Activated CD4-positive, alpha-beta memory T cell treated with anti-CD3 and anti-CD28 coated beads for 36 hours (primary cell): ENCODE measurements at regions of chr11 and their contacts with region 1.

Region 1: DNA sequence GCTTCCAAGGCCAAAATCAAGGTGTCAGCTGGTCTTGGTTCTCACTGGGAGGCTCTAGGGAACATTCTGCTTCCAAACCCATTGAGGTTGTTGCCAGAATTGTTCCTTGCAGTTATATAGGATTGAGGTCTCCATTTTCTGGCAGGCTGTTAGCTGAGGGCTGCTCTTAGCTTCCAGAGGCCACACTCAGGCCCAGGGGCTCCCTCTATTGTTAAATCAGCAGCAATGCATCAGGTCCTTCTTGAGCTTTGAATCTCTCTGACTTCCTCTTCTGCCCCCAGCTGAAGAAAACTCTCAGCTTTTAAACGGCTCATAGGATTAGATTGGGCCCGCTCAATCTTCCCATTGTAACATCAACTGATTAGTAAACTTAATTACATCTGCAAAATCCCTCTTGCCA is 39.3 kb upstream of the BSX start:
- DNase-seq: peak; percentile 34
- H3K4me3 Mint-ChIP-seq: no peak overlapping the region
- H3K27ac Mint-ChIP-seq: no peak overlapping the region
- H3K4me1 Mint-ChIP-seq: peaks cover 5% of the 10 kb centered on the region
- H3K27me3 Mint-ChIP-seq: peaks cover 3% of the 10 kb centered on the region

Region 2: GRCh38 chr11:122578168-122578825 is 442.7 kb before region 1 on chr11:
- CTCF ChIA-PET with region 1: interaction called, 15 read pairs
- POLR2A ChIA-PET with region 1: no interaction called
- intact Hi-C with region 1: loop called (anchors 2 kb)
- DNase-seq: no peak
- H3K4me3 Mint-ChIP-seq: no peak overlapping the region
- H3K27ac Mint-ChIP-seq: no peak overlapping the region
- H3K4me1 Mint-ChIP-seq: peaks cover 8% of the 10 kb centered on the region
- H3K27me3 Mint-ChIP-seq: peaks cover 2% of the 10 kb centered on the region

Region 3: GRCh38 chr11:122796128-122796717 is 224.7 kb before region 1 on chr11:
- CTCF ChIA-PET with region 1: interaction called, 10 read pairs
- POLR2A ChIA-PET with region 1: no interaction called
- intact Hi-C with region 1: loop called (anchors 5 kb)
- DNase-seq: peak; percentile 76
- H3K4me3 Mint-ChIP-seq: no peak overlapping the region
- H3K27ac Mint-ChIP-seq: no peak overlapping the region
- H3K4me1 Mint-ChIP-seq: no peaks in the 10 kb centered on the region
- H3K27me3 Mint-ChIP-seq: no peaks in the 10 kb centered on the region

Region 4: GRCh38 chr11:122882857-122883645 is 137.9 kb before region 1 on chr11:
- CTCF ChIA-PET with region 1: interaction called, 15 read pairs
- POLR2A ChIA-PET with region 1: no interaction called
- intact Hi-C with region 1: no loop called
- DNase-seq: peak; percentile 63
- H3K4me3 Mint-ChIP-seq: peak overlapping the region; percentile 78
- H3K27ac Mint-ChIP-seq: peak overlapping the region; percentile 64
- H3K4me1 Mint-ChIP-seq: peaks cover 25% of the 10 kb centered on the region
- H3K27me3 Mint-ChIP-seq: no peaks in the 10 kb centered on the region

Region 5: DNA sequence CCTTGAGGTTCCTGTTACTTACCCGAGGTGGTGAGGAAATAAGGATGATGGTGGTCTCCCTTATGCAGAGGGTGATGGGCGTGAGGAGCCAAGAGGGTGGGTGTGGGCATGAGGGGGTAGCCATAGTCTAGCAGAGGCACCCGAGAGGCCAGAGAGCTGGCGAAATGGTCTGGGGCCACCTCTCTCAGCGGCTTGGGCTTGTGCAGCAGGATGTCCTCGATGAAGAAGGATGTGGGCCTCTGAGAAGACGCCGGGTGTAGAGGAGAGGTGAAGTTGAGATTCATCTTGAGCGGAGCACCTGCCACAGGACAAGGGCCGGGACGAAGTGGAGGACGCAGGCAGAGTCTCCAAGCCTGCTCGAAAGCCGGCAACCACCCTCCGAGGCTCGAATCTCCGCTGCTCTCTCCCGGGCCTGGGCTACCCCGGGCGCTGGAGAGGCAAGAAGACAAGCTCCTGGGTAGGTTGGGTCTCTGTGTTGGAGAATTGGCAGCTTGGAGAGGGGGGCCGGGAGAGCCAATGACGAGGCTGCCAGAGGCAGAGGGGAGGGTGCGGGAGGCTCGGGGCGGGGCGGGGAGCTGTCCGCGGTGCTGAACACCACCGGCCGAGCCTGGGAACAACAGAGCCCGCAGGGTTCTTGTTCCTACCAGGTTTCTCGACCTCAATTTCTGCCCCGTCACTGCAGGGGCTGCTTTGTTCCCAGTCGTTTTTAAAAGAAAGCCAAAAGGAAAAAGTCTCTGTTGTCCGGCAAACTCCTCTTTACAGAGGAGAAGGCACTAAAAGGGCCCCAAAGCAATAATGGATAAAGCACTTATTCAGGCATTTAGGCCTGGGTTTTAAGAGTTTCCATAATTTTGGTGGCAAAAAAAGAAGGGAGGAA is 39.3 kb before region 1 on chr11 and contains the start of gene BSX:
- CTCF ChIA-PET with region 1: interaction called, 6 read pairs
- POLR2A ChIA-PET with region 1: no interaction called
- intact Hi-C with region 1: loop called (anchors 5 kb)
- DNase-seq: peak; percentile 70
- H3K4me3 Mint-ChIP-seq: no peak within 1 kb of the TSS
- H3K27ac Mint-ChIP-seq: no peak within 1 kb of the TSS
- H3K4me1 Mint-ChIP-seq: peaks cover 36% of the 10 kb centered on the region
- H3K27me3 Mint-ChIP-seq: peaks cover 84% of the 10 kb centered on the region
- total RNA-seq, gene BSX: not detected

Region 6: GRCh38 chr11:123054301-123055065 is 33.5 kb after region 1 on chr11:
- CTCF ChIA-PET with region 1: interaction called, 26 read pairs
- POLR2A ChIA-PET with region 1: interaction called, 3 read pairs
- intact Hi-C with region 1: loop called (anchors 2 kb)
- DNase-seq: no peak
- H3K4me3 Mint-ChIP-seq: no peak overlapping the region
- H3K27ac Mint-ChIP-seq: peak overlapping the region; percentile 100
- H3K4me1 Mint-ChIP-seq: peaks cover 47% of the 10 kb centered on the region
- H3K27me3 Mint-ChIP-seq: no peaks in the 10 kb centered on the region